Heart right ventricle (tissue), 16 donors: ENCODE measurements at regions of chr10 and their contacts with region 1.

Region 1: DNA sequence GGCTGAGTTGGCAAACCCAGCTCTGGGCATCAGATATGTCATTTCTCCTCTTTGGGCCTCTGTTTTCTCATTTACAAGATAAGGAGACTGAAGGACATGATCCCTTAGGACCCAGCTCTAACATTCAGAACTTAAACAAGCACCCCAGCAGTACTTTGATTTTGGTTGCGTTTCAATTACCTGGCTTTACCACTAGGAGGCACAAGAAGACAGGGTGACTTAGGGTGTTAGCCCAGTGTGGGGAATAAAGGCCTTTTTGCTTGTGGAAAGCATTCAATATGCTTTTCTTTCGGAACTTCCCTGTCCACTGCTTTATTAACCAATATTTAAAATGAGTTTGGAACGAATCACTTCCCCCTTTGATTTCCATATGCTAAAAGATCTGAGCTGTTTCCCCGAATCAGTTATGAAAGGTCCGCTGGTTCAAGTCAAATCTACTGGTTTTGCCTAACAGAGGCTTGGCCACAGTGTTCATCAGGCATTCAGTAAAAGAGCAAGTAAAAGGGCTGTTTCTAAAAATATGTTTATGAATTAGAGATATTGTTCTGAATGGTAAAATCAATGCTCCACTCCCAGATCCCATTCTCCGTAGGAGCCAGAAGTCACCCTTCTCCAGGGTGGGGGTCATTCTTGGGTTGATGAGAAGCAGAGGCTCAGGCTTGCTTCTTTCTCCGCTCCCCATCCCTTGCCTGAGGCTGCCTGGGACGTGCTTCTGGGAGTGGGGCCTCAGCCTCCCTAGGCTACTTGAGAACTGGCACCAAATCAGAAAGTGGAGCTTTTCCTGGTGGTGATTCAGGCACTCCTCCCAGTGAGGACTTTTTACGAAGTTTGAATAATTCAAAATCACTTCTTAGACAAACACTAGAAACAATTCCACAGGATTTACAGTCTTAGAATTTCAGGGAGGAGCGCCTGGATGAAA is 105.5 kb downstream of the MYOF start:
- DNase-seq: peak; percentile 25 to 76
- ATAC-seq: peak; percentile 83 to 97 (median 90)
- H3K4me3 ChIP-seq: peak overlapping the region in 2 of 10 donors; percentile 16 to 20
- H3K27ac ChIP-seq: peak overlapping the region; percentile 11 to 79 (median 70)
- H3K4me1 ChIP-seq: peaks cover 3 to 37% (median 10%) of the 10 kb centered on the region in 9 donors
- H3K27me3 ChIP-seq: no peaks in the 10 kb centered on the region
- CTCF ChIP-seq: peak; percentile 88 to 96 (median 91)

Region 2: DNA sequence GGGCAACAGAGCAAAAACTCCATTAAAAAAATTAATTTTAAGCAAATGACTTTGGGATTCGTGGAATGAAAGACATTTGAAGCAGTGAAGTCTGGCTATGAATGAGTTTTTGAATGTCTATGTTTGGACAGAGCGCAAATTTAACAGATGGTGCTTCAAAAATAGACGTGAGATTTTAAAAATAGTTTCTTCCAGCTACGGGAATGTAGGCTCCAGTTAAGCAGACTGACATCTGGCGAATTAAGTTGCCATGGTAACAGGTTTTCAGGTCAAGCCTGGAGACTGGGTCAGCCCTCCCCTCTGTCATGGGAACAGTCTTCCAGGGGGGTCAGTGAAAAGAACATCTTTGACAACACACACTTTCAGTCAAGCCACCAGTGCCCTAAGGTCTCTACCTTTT is 43.5 kb after region 1 on chr10:
- intact Hi-C with region 1: loop called in 1 of 10 experiments (anchors 5 kb)
- DNase-seq: peak in 1 of 2 donors; percentile 75
- ATAC-seq: peak; percentile 53 to 82 (median 70)
- H3K4me3 ChIP-seq: no peak overlapping the region
- H3K27ac ChIP-seq: peak overlapping the region; percentile 21 to 92 (median 73)
- H3K4me1 ChIP-seq: peaks cover 10 to 68% (median 47%) of the 10 kb centered on the region in 9 donors
- H3K27me3 ChIP-seq: no peaks in the 10 kb centered on the region
- CTCF ChIP-seq: no peak

Region 3: DNA sequence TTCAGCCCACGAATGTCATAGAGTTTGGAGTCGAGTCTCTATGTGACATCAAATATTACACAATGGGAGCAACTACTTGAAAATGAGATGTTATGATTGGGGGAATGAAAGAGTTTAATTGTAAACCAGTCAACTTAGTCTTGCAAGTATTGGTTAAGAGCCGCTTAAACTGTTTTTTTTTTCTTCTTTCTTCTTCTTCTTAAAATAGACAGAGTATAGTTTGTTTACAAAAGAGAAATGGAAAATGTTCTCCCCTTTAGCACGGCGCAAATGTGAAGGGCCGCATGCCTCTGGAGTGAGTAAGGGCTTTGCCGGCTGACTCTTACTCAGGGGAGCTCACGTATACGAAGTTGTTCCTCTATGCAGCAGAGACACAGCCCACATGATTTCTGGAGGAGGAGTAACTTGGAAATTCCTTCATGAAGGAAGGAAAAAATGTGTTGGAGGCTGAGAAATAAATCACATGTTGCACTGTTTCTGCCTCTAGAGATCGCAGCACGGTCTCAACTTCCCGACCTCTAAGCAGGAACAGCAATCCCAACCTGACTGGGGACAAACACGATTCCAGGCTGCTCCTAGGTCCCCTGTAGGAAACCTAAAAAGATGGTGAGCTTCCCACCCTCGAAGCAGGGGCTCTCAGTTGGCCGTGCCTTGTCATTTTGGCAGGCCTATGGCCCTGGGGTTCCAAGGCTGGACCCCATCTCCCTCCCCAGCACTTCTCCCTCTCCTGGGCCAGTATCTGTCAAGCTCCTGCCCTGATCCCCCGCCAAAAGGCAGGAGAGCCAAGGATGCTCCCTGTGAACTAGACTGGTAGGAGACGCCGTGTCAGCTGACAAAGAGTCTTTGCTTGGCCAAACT is 60.7 kb after region 1 on chr10:
- intact Hi-C with region 1: loop called in 1 of 10 experiments (anchors 5 kb)
- DNase-seq: peak; percentile 61 to 89
- ATAC-seq: peak; percentile 93 to 96 (median 96)
- H3K4me3 ChIP-seq: peak overlapping the region in 6 of 10 donors; percentile 8 to 27 (median 21)
- H3K27ac ChIP-seq: peak overlapping the region; percentile 88 to 99 (median 97)
- H3K4me1 ChIP-seq: peaks cover 18 to 82% (median 56%) of the 10 kb centered on the region in 9 donors
- H3K27me3 ChIP-seq: no peaks in the 10 kb centered on the region
- CTCF ChIP-seq: no peak

Region 4: DNA sequence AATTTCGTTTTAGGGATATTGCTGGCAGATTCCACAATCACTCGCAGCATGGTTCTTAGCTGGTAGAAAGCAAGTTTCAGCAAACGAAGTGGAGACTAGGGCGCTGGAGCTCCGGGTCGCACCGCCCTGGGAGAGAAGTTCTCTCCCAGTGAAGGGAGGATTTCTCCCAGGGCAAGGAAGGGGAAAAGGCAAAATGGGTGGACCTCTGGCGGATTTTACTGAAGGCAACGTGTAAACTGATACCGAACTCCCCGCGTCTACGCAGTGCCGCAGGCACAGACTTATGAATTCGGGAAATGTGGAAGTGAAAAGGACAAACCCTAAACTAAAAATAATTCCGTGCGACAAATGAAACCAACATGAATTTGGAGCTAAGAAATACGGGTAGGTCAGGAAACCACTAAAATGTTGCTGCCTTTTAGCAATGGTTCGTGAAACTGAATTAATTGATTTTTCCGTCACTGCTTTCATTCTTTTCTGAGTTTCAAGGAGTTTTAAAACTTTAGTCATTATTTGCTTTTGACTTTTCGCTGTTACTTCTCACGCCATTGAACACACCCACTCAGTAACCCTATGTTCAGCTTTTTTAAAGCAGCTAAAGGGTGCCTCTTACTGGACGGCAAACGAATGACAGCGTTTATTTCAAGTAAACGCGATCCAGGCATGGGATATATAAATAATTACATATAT is 105.7 kb after region 1 on chr10 and contains the start of gene MYOF:
- intact Hi-C with region 1: loop called (anchors 1 to 2 kb)
- DNase-seq: peak; percentile 48 to 65
- ATAC-seq: peak; percentile 83 to 96 (median 90)
- H3K4me3 ChIP-seq: peak within 1 kb of the TSS; percentile 43 to 91 (median 66)
- H3K27ac ChIP-seq: peak within 1 kb of the TSS; percentile 38 to 94 (median 81)
- H3K4me1 ChIP-seq: peaks cover 0 to 37% (median 13%) of the 10 kb centered on the region in 9 donors
- H3K27me3 ChIP-seq: peaks cover 0 to 5% (median 0%) of the 10 kb centered on the region in 7 donors
- CTCF ChIP-seq: peak; percentile 38 to 75 (median 57)
- total RNA-seq, gene MYOF: 21.7 to 54.6 (median 41.6) TPM

Region 5: GRCh38 chr10:93515071-93516005 is 138.7 kb after region 1 on chr10:
- intact Hi-C with region 1: loop called in 1 of 10 experiments (anchors 1 kb)
- DNase-seq: no peak
- ATAC-seq: peak in 7 of 8 donors; percentile 38 to 70 (median 54)
- H3K4me3 ChIP-seq: no peak overlapping the region
- H3K27ac ChIP-seq: peak overlapping the region in 9 of 10 donors; percentile 2 to 82 (median 52)
- H3K4me1 ChIP-seq: peaks cover 0 to 34% (median 7%) of the 10 kb centered on the region in 9 donors
- H3K27me3 ChIP-seq: no peaks in the 10 kb centered on the region
- CTCF ChIP-seq: no peak

Region 6: GRCh38 chr10:93680412-93681047 is 303.9 kb after region 1 on chr10:
- intact Hi-C with region 1: loop called in 1 of 10 experiments (anchors 5 kb)
- DNase-seq: no peak
- ATAC-seq: peak in 3 of 8 donors; percentile 23 to 81 (median 25)
- H3K4me3 ChIP-seq: no peak overlapping the region
- H3K27ac ChIP-seq: no peak overlapping the region
- H3K4me1 ChIP-seq: peaks cover 0 to 11% (median 0%) of the 10 kb centered on the region in 9 donors
- H3K27me3 ChIP-seq: no peaks in the 10 kb centered on the region
- CTCF ChIP-seq: peak in 7 of 9 donors; percentile 20 to 56 (median 51)

Region 7: DNA sequence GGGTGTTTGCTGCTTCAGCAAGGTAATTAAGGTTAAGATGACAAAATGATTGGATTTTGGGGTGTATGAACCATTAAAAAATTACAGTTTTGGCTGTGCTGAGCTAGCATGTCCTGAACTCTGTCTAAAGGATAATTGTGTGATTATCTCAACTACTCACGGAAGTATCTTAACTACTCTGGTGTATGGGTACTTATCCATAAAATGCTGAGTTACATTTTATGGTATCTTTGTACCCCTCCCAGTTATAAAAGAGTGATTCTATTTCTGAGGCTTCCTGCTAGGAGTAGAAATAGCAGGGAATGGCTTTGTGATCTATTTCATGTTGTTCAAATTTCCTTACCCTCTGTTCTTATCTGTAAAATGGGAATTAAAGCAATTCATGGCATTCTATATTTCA is 1329.5 kb after region 1 on chr10:
- intact Hi-C with region 1: no loop called
- DNase-seq: no peak
- ATAC-seq: no peak
- H3K4me3 ChIP-seq: no peak overlapping the region
- H3K27ac ChIP-seq: no peak overlapping the region
- H3K4me1 ChIP-seq: no peaks in the 10 kb centered on the region
- H3K27me3 ChIP-seq: no peaks in the 10 kb centered on the region
- CTCF ChIP-seq: no peak